ENCODE measurements at regions of chr20 and their contacts with region 1.

Region 1: DNA sequence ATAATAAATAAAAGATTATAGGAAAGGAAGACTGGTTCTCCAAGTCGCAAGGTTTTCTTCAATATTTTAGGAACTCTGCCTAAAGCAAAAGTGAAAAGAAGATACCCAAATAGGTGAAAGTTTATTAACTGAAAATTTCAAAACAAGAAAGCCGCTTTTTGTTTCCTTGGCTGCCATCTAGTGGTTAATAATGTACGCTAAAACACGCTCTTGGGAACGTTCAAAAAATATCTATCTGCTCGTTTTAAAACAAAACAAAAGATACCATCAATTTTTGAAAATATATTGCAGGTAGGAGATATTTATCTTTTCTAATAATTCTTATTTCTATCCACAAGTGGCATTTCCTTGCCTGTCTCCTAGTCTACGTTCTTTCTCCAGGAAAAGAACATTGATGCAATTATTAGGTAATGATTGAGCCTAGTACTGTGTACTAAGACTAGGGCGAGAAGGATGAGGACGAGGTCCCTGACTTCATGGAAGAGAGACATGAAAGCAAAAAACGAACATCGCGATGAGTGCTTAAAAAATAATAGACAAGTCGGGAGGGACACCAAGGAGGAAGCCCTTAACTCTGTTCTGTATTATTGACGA is 97.2 kb downstream of the SPTLC3 start:
- DNase-seq: no peak
- H3K4me3 Mint-ChIP-seq: no peak overlapping the region
- H3K27ac Mint-ChIP-seq: no peak overlapping the region
- H3K4me1 Mint-ChIP-seq: no peaks in the 10 kb centered on the region
- H3K27me3 Mint-ChIP-seq: peaks cover 4% of the 10 kb centered on the region

Region 2: GRCh38 chr20:12012241-12013222 is 1093.4 kb before region 1 on chr20:
- CTCF ChIA-PET with region 1: no interaction called
- POLR2A ChIA-PET with region 1: no interaction called
- intact Hi-C with region 1: loop called (anchors 5 kb)
- DNase-seq: peak; percentile 10
- H3K4me3 Mint-ChIP-seq: no peak overlapping the region
- H3K27ac Mint-ChIP-seq: no peak overlapping the region
- H3K4me1 Mint-ChIP-seq: no peaks in the 10 kb centered on the region
- H3K27me3 Mint-ChIP-seq: no peaks in the 10 kb centered on the region

Region 3: GRCh38 chr20:12925214-12925755 is 180.7 kb before region 1 on chr20:
- CTCF ChIA-PET with region 1: interaction called, 4 read pairs
- POLR2A ChIA-PET with region 1: no interaction called
- intact Hi-C with region 1: loop called (anchors 1 kb)
- DNase-seq: peak; percentile 28
- H3K4me3 Mint-ChIP-seq: no peak overlapping the region
- H3K27ac Mint-ChIP-seq: no peak overlapping the region
- H3K4me1 Mint-ChIP-seq: no peaks in the 10 kb centered on the region
- H3K27me3 Mint-ChIP-seq: no peaks in the 10 kb centered on the region

Region 4: GRCh38 chr20:12970372-12970821 is 135.6 kb before region 1 on chr20:
- CTCF ChIA-PET with region 1: interaction called, 4 read pairs
- POLR2A ChIA-PET with region 1: no interaction called
- intact Hi-C with region 1: loop called (anchors 1 kb)
- DNase-seq: no peak
- H3K4me3 Mint-ChIP-seq: no peak overlapping the region
- H3K27ac Mint-ChIP-seq: no peak overlapping the region
- H3K4me1 Mint-ChIP-seq: no peaks in the 10 kb centered on the region
- H3K27me3 Mint-ChIP-seq: peaks cover 3% of the 10 kb centered on the region

Measured in activated CD4-positive, alpha-beta memory T cell treated with anti-CD3 and anti-CD28 coated beads for 36 hours (primary cell).